HEK293 (cell line): ENCODE measurements at regions of chr10 and their contacts with region 1.

Region 1: DNA sequence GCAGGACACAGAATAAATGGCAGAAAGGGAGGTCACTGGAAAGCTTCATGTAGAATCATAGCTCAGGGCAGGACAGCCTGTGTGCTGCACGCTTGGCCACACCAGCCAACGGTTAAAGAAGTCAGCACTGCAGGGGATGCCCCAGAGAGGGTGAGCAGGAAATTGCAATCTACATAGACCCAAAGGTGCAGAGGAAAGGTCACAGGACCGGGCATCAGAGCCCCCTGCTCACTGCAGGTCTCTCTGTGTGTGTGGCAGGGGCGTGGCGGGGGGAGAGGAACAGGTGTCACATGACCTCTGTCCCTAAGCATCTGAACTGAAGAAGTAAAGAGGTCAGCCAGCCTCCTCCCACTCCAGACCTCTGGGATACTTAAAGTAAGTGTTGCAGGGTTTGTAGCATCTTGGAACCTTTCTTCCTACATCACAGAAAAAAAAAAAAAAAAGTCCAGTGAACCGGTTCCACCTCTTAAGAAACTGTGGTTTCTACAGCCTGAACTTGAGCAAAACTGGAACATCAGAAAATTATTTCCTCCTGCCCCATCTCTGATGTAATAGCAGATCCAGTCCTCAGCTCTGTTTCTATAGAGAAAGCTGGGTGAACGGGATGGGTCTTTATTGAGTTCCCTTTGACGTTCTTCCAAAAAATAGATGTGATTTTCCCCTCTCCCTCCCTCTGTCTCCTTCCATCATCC is 64.3 kb downstream of the RGS10 start:
- H3K4me3 ChIP-seq: no peak overlapping the region
- H3K27ac ChIP-seq: no peak overlapping the region
- H3K4me1 ChIP-seq: no peaks in the 10 kb centered on the region
- CTCF ChIP-seq: no peak

Region 2: GRCh38 chr10:119006451-119007210 is 471.6 kb before region 1 on chr10:
- CTCF ChIA-PET with region 1: no interaction called
- POLR2A ChIA-PET with region 1: no interaction called
- H3K4me3 ChIP-seq: no peak overlapping the region
- H3K27ac ChIP-seq: no peak overlapping the region
- H3K4me1 ChIP-seq: peaks cover 10% of the 10 kb centered on the region; the same call in 1 of the 2 replicates
- CTCF ChIP-seq: no peak

Region 3: DNA sequence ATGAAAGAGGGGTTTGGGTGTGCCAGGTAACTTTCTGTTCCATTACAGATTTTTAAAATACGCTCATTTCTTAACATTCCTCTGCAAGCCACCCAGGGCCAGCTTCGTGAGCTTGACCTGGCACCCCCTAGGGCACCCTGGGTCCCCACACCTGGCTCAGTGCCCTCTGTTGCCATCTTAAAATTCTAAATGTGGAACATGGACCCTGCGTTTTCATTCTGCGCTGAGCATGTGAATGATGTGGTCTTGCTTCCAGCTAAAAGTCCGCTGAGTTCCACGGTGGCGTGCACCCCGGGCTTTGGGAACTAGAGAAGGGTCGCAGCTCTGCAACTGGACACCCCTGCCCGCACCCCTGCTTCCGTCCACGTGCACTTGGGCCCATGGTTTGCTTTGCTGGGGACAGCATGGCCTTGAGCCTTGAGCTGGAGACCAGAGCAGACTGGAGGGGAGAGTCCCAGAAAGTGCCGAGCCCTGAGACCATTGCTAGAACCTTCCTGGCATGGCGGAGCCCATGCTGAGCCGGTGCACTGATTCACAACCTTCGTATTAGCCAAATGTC is 26.9 kb before region 1 on chr10:
- CTCF ChIA-PET with region 1: no interaction called
- POLR2A ChIA-PET with region 1: no interaction called
- H3K4me3 ChIP-seq: no peak overlapping the region
- H3K27ac ChIP-seq: no peak overlapping the region
- H3K4me1 ChIP-seq: no peaks in the 10 kb centered on the region
- CTCF ChIP-seq: no peak

Region 4: DNA sequence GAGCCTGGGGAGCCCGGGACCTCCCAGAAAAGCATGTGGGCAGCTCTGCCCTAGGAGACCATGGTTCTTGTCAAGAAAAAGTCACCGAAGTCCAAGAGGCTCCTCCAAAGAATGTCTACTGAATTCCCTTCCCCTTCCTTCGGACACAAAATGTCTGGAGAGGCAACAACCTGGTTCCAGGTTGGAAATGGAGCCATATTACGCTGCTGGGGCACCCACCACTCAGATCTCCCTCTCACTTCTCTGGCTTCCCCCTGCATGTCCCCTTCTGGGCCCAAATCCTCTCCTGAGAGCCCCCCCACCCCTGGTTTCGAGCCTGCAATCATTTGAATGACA is 11.7 kb after region 1 on chr10:
- CTCF ChIA-PET with region 1: interaction called, 10 read pairs
- POLR2A ChIA-PET with region 1: no interaction called
- H3K4me3 ChIP-seq: no peak overlapping the region
- H3K27ac ChIP-seq: no peak overlapping the region
- H3K4me1 ChIP-seq: peaks cover 5% of the 10 kb centered on the region
- CTCF ChIP-seq: no peak

Region 5: DNA sequence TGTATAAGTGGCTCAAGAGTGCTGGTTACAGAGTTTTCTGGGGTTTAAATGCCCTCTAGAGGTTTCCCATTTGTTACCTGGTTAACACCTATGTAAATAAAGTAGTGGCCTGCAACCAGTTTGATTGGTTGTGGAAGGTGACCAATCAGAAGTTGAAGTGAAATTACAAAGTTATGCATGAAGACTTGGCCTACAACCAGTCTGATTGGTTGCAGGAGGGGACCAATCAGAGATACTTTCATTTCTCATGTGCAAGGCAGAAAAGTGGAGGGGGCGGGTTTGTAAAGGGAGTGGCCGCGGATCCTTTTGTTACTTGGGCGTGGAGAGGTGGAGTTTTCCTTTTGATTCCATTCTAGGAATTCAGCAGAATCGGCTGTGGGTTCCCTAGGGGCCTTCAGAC is 495.0 kb after region 1 on chr10:
- CTCF ChIA-PET with region 1: no interaction called
- POLR2A ChIA-PET with region 1: no interaction called
- H3K4me3 ChIP-seq: no peak overlapping the region
- H3K27ac ChIP-seq: no peak overlapping the region
- H3K4me1 ChIP-seq: no peaks in the 10 kb centered on the region
- CTCF ChIP-seq: no peak